ENCODE measurements at regions of chr3 and their contacts with region 1.

Region 1: GRCh38 chr3:122458992-122459391 is 43.1 kb upstream of the WDR5B start:
- DNase-seq: no peak
- CTCF ChIP-seq: peak; percentile 33

Region 2: GRCh38 chr3:122183521-122183892 is 275.5 kb before region 1 on chr3 and contains the start of gene CASR:
- CTCF ChIA-PET with region 1: no interaction called
- POLR2A ChIA-PET with region 1: no interaction called
- DNase-seq: peak; percentile 23
- CTCF ChIP-seq: no peak

Region 3: GRCh38 chr3:122468896-122469533 is 10.0 kb after region 1 on chr3:
- CTCF ChIA-PET with region 1: interaction called, 12 read pairs
- POLR2A ChIA-PET with region 1: no interaction called
- DNase-seq: no peak
- CTCF ChIP-seq: no peak

Region 4: DNA sequence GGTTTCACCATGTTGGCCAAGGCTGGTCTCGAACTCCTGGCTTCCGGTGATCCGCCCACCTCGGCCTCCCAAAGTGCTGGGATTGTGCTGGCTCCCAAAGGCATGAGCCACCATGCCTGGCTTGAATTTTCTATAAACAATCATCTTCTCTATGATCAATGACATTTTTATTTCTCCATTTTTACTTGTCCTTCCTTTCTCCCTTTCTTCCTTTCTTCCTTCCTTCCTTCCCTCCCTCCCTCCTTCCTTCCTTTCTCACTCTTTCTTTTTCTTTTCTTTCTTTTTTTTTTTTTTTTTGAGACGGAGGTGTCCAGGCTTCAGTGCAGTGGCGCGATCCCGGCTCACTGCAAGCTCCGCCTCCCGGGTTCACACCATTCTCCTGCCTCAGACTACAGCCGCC is 64.3 kb after region 1 on chr3:
- CTCF ChIA-PET with region 1: no interaction called
- POLR2A ChIA-PET with region 1: no interaction called
- DNase-seq: no peak
- CTCF ChIP-seq: no peak

Region 5: DNA sequence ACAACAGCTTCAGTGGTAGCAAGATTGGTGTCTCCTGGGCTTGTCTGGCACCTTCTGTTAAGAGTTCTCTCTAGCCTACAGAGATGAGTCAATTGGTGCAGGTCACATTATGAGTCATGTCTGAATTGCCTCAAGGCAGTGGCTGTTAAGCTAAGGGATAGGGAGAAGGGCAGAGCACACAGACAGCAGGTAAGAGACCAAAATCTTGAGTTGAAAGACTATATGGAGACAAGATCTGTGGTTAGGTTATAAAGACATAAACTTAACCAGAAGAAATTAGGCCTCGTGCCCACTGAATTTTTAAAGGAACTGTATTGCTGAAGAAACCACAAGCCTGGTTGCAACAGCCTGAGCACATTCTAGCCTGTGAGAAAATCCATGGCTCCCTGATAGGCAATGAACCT is 74.9 kb after region 1 on chr3:
- CTCF ChIA-PET with region 1: no interaction called
- POLR2A ChIA-PET with region 1: no interaction called
- DNase-seq: peak; percentile 77
- CTCF ChIP-seq: no peak